WTC11 (cell line): ENCODE measurements at regions of chr7 and their contacts with region 1.

Region 1: DNA sequence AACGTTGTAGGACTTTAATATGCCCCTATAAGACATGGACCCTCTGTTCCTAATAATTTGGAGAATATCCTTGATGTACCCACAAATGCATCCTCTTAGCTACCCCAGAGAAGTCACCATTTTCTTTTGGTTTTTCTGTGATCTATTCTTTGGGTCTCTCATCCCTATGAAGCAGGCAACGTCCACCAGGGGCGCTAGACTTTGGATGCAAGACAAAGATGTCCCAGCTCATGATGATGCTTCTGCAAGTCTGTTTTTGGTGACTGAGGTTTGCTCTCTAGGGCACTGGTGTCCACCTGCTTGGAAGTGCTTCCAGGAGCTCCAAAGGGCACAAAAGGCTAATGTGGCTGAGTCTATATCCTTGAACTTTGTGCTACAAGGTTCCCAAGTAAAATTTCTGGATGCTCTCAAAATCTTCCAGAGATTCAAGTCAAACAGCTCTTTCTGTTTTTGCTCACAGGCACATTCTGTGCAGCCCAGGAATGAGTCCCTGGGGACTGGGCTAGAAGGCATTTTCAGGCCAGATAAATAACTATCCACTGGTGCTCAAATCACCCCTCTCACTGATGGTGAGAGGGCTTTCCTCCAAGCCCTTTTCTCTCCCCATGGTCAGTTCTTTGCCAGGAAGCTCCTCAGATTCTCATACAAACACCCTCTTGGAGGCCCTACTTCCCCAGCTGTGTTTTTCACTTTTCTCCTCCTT is 166.4 kb downstream of the C7orf25 start:
- DNase-seq: peak; percentile 82
- ATAC-seq: peak; percentile 43; the same call in 1 of the 2 replicates
- H3K4me3 Mint-ChIP-seq: no peak overlapping the region
- H3K27ac Mint-ChIP-seq: no peak overlapping the region
- H3K4me1 Mint-ChIP-seq: peaks cover 6% of the 10 kb centered on the region
- H3K27me3 Mint-ChIP-seq: no peaks in the 10 kb centered on the region
- CTCF ChIP-seq: peak; percentile 85

Region 2: GRCh38 chr7:42567051-42567450 is 178.5 kb before region 1 on chr7:
- CTCF ChIA-PET with region 1: no interaction called
- POLR2A ChIA-PET with region 1: no interaction called
- DNase-seq: no peak
- ATAC-seq: no peak
- H3K4me3 Mint-ChIP-seq: no peak overlapping the region
- H3K27ac Mint-ChIP-seq: no peak overlapping the region
- H3K4me1 Mint-ChIP-seq: 0 out of 2 replicates have a peak, but pooled peaks cover 2% of the 10 kb centered on the region
- H3K27me3 Mint-ChIP-seq: no peaks in the 10 kb centered on the region
- CTCF ChIP-seq: no peak

Region 3: DNA sequence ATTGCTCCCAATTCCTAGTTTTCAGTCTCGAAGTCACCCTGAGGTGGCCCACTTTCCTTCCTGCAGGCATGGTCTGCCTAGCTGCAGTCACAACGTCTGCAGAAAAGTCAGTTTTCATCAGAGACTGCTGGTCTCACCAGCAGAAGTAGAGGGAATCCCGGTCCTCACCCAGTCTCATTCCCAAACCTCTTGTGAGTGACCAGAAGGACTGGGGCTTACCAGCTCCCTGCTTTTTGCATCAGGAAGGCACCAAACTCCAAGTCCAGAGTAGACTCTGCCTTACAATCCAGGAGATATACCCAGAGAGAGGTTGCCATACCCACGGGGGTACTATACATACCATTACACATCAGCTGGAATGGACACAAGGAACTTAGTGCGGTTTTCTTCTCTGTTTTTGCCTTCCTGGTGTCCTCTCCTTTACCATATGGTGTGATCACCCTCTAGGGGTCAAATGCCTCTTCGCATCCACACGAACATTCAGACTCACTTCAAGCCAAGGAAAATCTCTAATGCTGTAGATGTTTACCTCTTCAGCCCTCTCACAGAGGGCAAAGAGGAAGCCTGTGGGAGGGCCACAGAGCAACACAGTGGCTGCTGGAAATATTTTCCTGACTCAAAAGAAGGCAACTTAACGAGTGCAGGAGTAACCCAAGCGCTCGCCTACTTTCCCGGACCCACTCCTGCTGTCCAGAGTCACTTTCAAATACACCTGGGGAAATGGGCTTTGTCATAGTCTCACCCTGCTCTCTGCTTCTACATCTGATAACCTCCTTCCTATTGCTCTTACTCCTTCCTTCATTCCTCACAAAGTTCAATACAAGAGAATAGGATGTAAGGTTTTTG is 54.5 kb before region 1 on chr7:
- CTCF ChIA-PET with region 1: interaction called, 10 read pairs
- POLR2A ChIA-PET with region 1: no interaction called
- DNase-seq: peak; percentile 32
- ATAC-seq: peak; percentile 81
- H3K4me3 Mint-ChIP-seq: no peak overlapping the region
- H3K27ac Mint-ChIP-seq: no peak overlapping the region
- H3K4me1 Mint-ChIP-seq: peaks cover 43% of the 10 kb centered on the region
- H3K27me3 Mint-ChIP-seq: peaks cover 17% of the 10 kb centered on the region
- CTCF ChIP-seq: peak; percentile 38

Region 4: DNA sequence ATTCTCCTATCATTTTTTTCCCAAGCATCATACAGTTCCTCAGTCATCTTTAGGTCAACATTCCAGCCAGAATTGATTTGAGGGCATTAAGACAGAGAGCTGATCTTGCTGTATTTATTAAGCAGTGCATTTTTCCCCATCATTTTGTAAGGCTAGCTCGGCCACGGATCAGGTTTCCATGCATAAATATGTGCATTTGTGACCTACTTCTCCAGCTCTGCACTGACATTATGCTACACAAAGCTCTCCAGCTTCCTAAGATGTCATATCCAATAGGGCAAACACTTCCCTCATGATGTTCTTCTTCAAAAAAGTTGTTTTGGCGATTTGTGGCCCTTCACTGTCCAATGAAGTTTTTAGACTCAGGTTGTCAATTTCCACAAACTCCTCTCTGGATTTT is 36.2 kb before region 1 on chr7:
- CTCF ChIA-PET with region 1: no interaction called
- POLR2A ChIA-PET with region 1: no interaction called
- DNase-seq: no peak
- ATAC-seq: no peak
- H3K4me3 Mint-ChIP-seq: no peak overlapping the region
- H3K27ac Mint-ChIP-seq: no peak overlapping the region
- H3K4me1 Mint-ChIP-seq: peaks cover 6% of the 10 kb centered on the region
- H3K27me3 Mint-ChIP-seq: no peaks in the 10 kb centered on the region
- CTCF ChIP-seq: no peak

Region 5: GRCh38 chr7:42758124-42758523 is 12.6 kb after region 1 on chr7:
- CTCF ChIA-PET with region 1: interaction called, 14 read pairs
- POLR2A ChIA-PET with region 1: no interaction called
- DNase-seq: no peak
- ATAC-seq: no peak
- H3K4me3 Mint-ChIP-seq: no peak overlapping the region
- H3K27ac Mint-ChIP-seq: no peak overlapping the region
- H3K4me1 Mint-ChIP-seq: peaks cover 15% of the 10 kb centered on the region
- H3K27me3 Mint-ChIP-seq: peaks cover 3% of the 10 kb centered on the region
- CTCF ChIP-seq: no peak

Region 6: DNA sequence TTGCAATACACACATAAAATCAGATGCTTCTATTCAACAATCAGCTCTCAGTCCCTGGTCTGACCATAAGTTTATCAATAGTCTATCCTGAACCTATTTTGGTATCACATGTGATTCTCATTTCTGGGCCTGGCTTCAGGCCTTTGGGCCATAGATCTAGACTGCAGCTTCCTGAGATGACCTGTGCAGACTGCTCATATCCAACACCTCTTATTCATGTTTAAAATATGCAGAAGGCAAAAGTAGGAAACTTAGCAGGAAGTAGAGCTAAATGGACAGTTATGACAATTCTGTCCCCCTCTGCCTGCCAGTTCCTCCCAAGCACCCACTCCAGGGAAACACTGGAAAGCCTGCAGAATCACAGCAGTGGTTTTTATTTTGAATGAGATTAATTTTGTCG is 113.1 kb after region 1 on chr7:
- CTCF ChIA-PET with region 1: no interaction called
- POLR2A ChIA-PET with region 1: no interaction called
- DNase-seq: no peak
- ATAC-seq: no peak
- H3K4me3 Mint-ChIP-seq: no peak overlapping the region
- H3K27ac Mint-ChIP-seq: no peak overlapping the region
- H3K4me1 Mint-ChIP-seq: peaks cover 15% of the 10 kb centered on the region
- H3K27me3 Mint-ChIP-seq: peaks cover 22% of the 10 kb centered on the region
- CTCF ChIP-seq: no peak

Region 7: GRCh38 chr7:43139137-43139536 is 393.6 kb after region 1 on chr7:
- CTCF ChIA-PET with region 1: no interaction called
- POLR2A ChIA-PET with region 1: no interaction called
- DNase-seq: no peak
- ATAC-seq: peak; percentile 16
- H3K4me3 Mint-ChIP-seq: no peak overlapping the region
- H3K27ac Mint-ChIP-seq: peak overlapping the region; percentile 90
- H3K4me1 Mint-ChIP-seq: peaks cover 74% of the 10 kb centered on the region
- H3K27me3 Mint-ChIP-seq: no peaks in the 10 kb centered on the region
- CTCF ChIP-seq: no peak